Activated T-helper 1 cell treated with anti-CD3 and anti-CD28 coated beads, Interleukin-12 subunit alpha, Interleukin-12 subunit beta, Interleukin-2, Interleukin-4 antibody, amounts not matched to agents 30 ng/mL and 10 ng/mL and 1 ng/mL, durations not matched to agents 14 hours and 24 hours and 36 hours (primary cell): ENCODE measurements at regions of chr3 and their contacts with region 1.

Region 1: GRCh38 chr3:141530133-141530768 is 43.4 kb downstream of the RASA2 start:
- DNase-seq: no peak
- H3K4me3 Mint-ChIP-seq: peak overlapping the region; percentile 27
- H3K27ac Mint-ChIP-seq: peak overlapping the region; percentile 77
- H3K4me1 Mint-ChIP-seq: peaks cover 59% of the 10 kb centered on the region
- H3K27me3 Mint-ChIP-seq: no peaks in the 10 kb centered on the region

Region 2: GRCh38 chr3:141498598-141499223 is 31.5 kb before region 1 on chr3:
- intact Hi-C with region 1: loop called (anchors 1 kb)
- DNase-seq: peak; percentile 89
- H3K4me3 Mint-ChIP-seq: peak overlapping the region; percentile 54
- H3K27ac Mint-ChIP-seq: peak overlapping the region; percentile 83
- H3K4me1 Mint-ChIP-seq: peaks cover 66% of the 10 kb centered on the region
- H3K27me3 Mint-ChIP-seq: no peaks in the 10 kb centered on the region

Region 3: GRCh38 chr3:141514382-141514781 is 15.9 kb before region 1 on chr3:
- intact Hi-C with region 1: loop called (anchors 2 kb)
- DNase-seq: no peak
- H3K4me3 Mint-ChIP-seq: no peak overlapping the region
- H3K27ac Mint-ChIP-seq: no peak overlapping the region
- H3K4me1 Mint-ChIP-seq: peaks cover 39% of the 10 kb centered on the region
- H3K27me3 Mint-ChIP-seq: no peaks in the 10 kb centered on the region

Region 4: GRCh38 chr3:141544697-141545096 is 14.4 kb after region 1 on chr3:
- intact Hi-C with region 1: loop called (anchors 1 kb)
- DNase-seq: peak; percentile 6
- H3K4me3 Mint-ChIP-seq: peak overlapping the region; percentile 67
- H3K27ac Mint-ChIP-seq: peak overlapping the region; percentile 81
- H3K4me1 Mint-ChIP-seq: peaks cover 60% of the 10 kb centered on the region
- H3K27me3 Mint-ChIP-seq: no peaks in the 10 kb centered on the region

Region 5: DNA sequence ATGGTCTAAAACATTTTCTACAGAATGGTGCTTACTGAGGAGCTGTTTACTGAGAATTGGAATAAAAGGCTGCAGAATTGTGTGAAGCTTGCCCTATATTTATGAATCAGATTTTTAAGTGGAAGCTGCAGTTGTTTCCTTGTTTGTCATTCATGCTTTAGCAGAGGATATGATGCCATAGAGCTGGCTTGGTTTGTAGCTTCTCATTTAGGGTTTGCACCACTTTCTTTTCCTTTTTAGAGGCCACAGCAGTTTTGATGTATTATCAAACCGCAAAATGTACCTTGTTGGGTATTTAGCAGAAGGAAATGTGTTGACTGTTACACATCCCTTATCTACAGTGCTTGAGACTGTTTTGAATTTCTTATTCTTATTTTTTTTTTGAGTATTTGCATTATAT is 22.8 kb after region 1 on chr3:
- intact Hi-C with region 1: loop called (anchors 1 kb)
- DNase-seq: peak; percentile 35
- H3K4me3 Mint-ChIP-seq: peak overlapping the region; percentile 38
- H3K27ac Mint-ChIP-seq: peak overlapping the region; percentile 93
- H3K4me1 Mint-ChIP-seq: peaks cover 52% of the 10 kb centered on the region
- H3K27me3 Mint-ChIP-seq: no peaks in the 10 kb centered on the region

Region 6: GRCh38 chr3:142019794-142020320 is 489.6 kb after region 1 on chr3:
- intact Hi-C with region 1: no loop called
- DNase-seq: no peak
- H3K4me3 Mint-ChIP-seq: no peak overlapping the region
- H3K27ac Mint-ChIP-seq: no peak overlapping the region
- H3K4me1 Mint-ChIP-seq: peaks cover 30% of the 10 kb centered on the region
- H3K27me3 Mint-ChIP-seq: no peaks in the 10 kb centered on the region